ENCODE measurements at regions of chr3 and their contacts with region 1.

Region 1: DNA sequence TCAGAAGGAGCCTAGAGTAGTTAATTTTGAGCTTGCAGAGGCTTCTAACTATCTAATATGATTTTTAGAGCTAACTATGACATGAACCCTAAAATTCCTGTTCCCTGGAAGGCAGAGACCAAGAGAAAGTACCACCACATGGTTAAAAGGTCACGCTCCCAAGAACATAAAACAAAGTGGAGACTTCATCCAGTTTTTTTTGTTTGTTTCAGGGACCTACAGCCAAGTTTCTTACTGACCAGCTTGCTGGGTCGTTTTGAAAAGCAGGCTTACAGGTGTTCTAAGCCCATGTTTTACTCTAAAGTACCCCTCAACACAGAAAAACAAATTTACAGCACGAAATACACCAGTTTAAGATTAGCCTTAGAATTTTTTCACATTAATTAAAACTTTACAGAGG is 39.6 kb upstream of the SKIL start:
- DNase-seq: no peak

Region 2: DNA sequence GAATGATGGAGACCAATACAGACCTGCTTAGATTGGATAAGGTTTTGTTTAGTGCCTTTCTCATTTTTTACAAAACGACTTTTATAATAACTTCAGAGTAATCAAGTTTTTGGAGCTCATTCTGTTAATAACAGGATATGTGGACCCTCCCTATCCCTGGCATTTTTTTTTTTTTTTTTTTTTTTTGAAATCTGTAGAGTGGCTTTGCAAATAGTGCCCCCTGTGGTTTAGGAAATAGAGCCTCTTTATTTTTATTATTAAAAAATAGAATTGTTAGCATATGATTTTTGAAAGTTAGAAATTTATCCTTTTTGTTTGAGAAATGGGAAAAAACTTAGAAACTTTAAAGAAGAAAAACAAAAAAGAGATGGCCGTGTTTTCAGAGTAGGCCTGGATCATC is 51.0 kb after region 1 on chr3:
- intact Hi-C with region 1: loop called in 1 of 2 experiments (anchors 10 kb)
- DNase-seq: no peak

Region 3: DNA sequence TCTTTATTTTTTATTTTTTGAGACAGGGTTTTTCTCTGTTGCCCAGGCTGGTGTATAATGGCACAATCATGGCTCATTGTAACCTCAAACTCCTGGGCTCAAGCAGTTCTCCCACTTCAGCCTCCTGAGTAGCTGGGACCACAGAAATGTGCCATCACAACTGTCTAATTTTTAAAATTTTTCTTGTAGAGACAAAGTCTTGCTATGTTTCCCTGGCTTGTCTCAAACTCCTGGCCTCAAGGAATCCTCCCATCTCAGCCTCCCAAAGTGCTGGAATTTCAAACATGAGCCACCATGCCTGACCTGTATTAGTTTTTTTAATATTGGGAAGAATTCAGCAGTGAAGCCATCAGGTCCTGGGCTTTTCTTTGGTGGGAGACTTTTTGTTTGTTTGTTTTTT is 87.1 kb after region 1 on chr3:
- intact Hi-C with region 1: loop called in 1 of 2 experiments (anchors 10 kb)
- DNase-seq: no peak